ENCODE measurements at regions of chr9 and their contacts with region 1.

Region 1: GRCh38 chr9:93159601-93160471 is 24.1 kb upstream of the WNK2 start:
- DNase-seq: peak; percentile 96
- H3K4me3 ChIP-seq: no peak overlapping the region
- H3K27ac ChIP-seq: peak overlapping the region in 1 of 8 donors; percentile 7
- H3K4me1 ChIP-seq: peaks cover 0 to 13% (median 8%) of the 10 kb centered on the region in 6 donors
- H3K27me3 ChIP-seq: no peaks in the 10 kb centered on the region
- CTCF ChIP-seq: peak; percentile 94 to 99 (median 97)
- POLR2A ChIP-seq: no peak

Region 2: GRCh38 chr9:93302551-93303257 is 142.9 kb after region 1 on chr9:
- intact Hi-C with region 1: loop called (anchors 5 kb)
- DNase-seq: peak; percentile 87
- H3K4me3 ChIP-seq: no peak overlapping the region
- H3K27ac ChIP-seq: peak overlapping the region in 1 of 8 donors; percentile 21
- H3K4me1 ChIP-seq: peaks cover 6 to 29% (median 10%) of the 10 kb centered on the region in 6 donors
- H3K27me3 ChIP-seq: peaks cover 0 to 4% (median 0%) of the 10 kb centered on the region in 7 donors
- CTCF ChIP-seq: peak; percentile 51 to 83 (median 76)
- POLR2A ChIP-seq: no peak

Region 3: DNA sequence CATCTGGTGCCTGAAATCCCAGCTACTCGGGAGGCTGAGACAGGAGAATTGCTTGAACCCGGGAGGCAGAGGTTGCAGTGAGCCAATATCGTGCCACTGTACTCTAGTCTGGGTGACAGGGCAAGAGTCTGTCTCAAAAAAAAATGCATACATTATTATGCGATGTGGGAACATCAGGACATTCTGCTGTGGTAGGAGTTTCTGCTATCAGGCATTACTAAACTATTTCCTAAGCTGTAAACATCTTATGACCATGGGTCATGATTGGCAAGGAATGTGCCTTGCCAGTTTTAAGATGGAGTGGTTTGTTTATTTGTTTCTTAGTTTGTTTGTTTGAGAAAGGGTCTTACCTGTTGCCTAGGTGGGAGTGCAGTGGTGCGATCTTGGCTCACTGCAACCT is 246.5 kb after region 1 on chr9:
- intact Hi-C with region 1: no loop called
- DNase-seq: no peak
- H3K4me3 ChIP-seq: no peak overlapping the region
- H3K27ac ChIP-seq: no peak overlapping the region
- H3K4me1 ChIP-seq: no peaks in the 10 kb centered on the region
- H3K27me3 ChIP-seq: no peaks in the 10 kb centered on the region
- CTCF ChIP-seq: no peak
- POLR2A ChIP-seq: no peak

Region 4: GRCh38 chr9:93566408-93567270 is 406.8 kb after region 1 on chr9:
- intact Hi-C with region 1: loop called (anchors 10 kb)
- DNase-seq: peak; percentile 100
- H3K4me3 ChIP-seq: peak overlapping the region; percentile 18 to 75 (median 42)
- H3K27ac ChIP-seq: peak overlapping the region; percentile 84 to 98 (median 92)
- H3K4me1 ChIP-seq: peaks cover 9 to 40% (median 28%) of the 10 kb centered on the region in 6 donors
- H3K27me3 ChIP-seq: no peaks in the 10 kb centered on the region
- CTCF ChIP-seq: peak; percentile 89 to 100 (median 99)
- POLR2A ChIP-seq: peak; percentile 29 to 91 (median 79)

Region 5: DNA sequence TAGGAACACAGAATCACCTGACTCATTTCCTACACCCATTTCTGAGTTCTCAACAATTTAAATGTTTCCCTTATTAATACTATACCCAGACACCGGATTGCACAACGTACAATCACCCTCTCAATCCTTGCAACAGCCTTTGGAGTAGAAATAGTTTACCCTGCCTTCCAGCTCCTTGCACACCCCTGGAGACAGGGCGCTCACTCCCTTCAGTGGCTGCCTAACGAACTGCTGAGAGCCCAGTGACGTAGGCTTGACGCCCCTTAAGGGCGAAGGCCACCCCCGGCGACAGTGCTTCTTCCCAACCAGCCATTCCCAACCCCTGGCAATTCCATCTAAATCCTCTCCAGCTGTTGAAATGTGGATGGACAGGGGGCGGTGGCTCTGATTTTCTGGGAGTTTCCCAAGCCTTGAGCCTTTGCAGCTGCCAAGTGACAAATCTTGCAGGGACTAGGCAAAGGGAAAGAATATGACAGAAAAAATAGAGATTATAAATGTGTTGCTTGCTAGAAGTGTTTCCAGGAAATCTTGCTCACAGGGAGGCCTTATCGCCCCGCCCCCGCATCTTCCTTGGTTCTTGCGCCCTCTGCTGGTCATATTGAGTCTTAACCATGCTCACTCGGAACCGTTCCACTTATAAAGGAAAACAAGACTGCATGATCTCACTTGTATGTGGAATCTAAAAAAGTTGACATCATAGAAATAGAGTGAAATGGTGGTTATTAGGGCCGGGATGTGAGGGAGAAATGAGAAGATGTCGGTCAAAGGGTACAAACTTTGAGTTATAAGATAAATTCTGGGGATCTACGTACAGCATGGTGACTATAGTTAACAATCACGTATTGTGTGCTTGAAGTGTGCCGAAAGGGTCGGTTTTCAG is 803.0 kb after region 1 on chr9:
- intact Hi-C with region 1: loop called (anchors 10 kb)
- DNase-seq: peak; percentile 91
- H3K4me3 ChIP-seq: no peak overlapping the region
- H3K27ac ChIP-seq: peak overlapping the region in 1 of 8 donors; percentile 12
- H3K4me1 ChIP-seq: peaks cover 20 to 49% (median 39%) of the 10 kb centered on the region in 6 donors
- H3K27me3 ChIP-seq: peaks cover 28 to 96% (median 42%) of the 10 kb centered on the region in 7 donors
- CTCF ChIP-seq: peak; percentile 69 to 88 (median 86)
- POLR2A ChIP-seq: no peak

Measured in spleen (tissue), 13 donors.